CD14-positive monocyte (primary cell): ENCODE measurements at regions of chr14 and their contacts with region 1.

Region 1: DNA sequence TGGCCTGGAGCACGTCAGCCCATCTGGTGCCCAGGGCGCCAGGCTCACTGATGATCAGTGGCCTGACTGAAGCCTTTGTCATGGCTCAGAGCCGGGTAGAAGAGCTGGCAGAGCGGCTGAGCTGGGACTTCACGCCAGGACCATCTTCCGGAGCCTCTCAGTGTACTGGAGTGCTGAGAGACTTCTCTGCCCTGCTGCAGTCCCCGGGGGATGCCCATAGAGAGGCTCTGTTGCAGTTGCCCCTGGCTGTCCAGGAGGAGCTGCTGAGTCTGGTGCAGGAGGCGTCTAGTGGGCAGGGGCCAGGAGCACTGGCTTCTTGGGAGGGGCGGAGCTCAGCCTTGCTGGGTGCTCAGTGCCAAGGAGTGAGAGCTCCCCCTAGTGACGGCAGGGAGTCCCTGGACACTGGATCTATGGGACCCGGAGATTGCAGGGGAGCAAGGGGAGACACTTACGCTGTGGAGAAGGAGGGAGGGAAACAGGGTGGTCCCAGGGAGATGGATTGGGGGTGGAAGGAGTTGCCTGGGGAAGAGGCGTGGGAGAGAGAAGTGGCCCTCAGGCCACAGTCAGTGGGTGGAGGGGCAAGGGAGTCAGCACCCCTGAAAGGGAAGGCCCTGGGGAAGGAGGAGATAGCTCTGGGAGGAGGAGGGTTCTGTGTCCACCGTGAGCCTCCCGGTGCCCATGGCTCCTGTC is 2.0 kb downstream of the KHNYN start:
- DNase-seq: peak; percentile 90 to 93 (median 92)
- H3K4me3 ChIP-seq: peak overlapping the region in 1 of 3 experiments; percentile 91
- H3K4me3 Mint-ChIP-seq: peak overlapping the region; percentile 17 to 86
- H3K27ac ChIP-seq: peak overlapping the region; percentile 81 to 100
- H3K27ac Mint-ChIP-seq: peak overlapping the region; percentile 91 to 96 (median 95)
- H3K4me1 ChIP-seq: peaks cover 32 to 40% of the 10 kb centered on the region in 2 donors
- H3K4me1 Mint-ChIP-seq: peaks cover 36% of the 10 kb centered on the region
- H3K27me3 ChIP-seq: no peaks in the 10 kb centered on the region
- H3K27me3 Mint-ChIP-seq: peaks cover 5 to 9% (median 8%) of the 10 kb centered on the region in 3 donors
- CTCF ChIP-seq: peak; percentile 90

Region 2: GRCh38 chr14:24241829-24242443 is 189.8 kb before region 1 on chr14:
- intact Hi-C with region 1: loop called in 1 of 2 experiments (anchors 10 kb)
- DNase-seq: peak; percentile 88 to 93 (median 92)
- H3K4me3 ChIP-seq: peak overlapping the region; percentile 48 to 82 (median 78)
- H3K4me3 Mint-ChIP-seq: peak overlapping the region; percentile 90 to 97
- H3K27ac ChIP-seq: peak overlapping the region; percentile 94 to 98
- H3K27ac Mint-ChIP-seq: peak overlapping the region; percentile 99 to 100 (median 100)
- H3K4me1 ChIP-seq: peaks cover 50 to 72% of the 10 kb centered on the region in 2 donors
- H3K4me1 Mint-ChIP-seq: peaks cover 66% of the 10 kb centered on the region
- H3K27me3 ChIP-seq: no peaks in the 10 kb centered on the region
- H3K27me3 Mint-ChIP-seq: no peaks in the 10 kb centered on the region
- CTCF ChIP-seq: peak; percentile 33

Region 3: GRCh38 chr14:24332268-24332993 is 99.3 kb before region 1 on chr14:
- intact Hi-C with region 1: loop called (anchors 2 kb)
- DNase-seq: peak; percentile 63 to 77 (median 67)
- H3K4me3 ChIP-seq: peak overlapping the region in 1 of 3 experiments; percentile 67
- H3K4me3 Mint-ChIP-seq: peak overlapping the region; percentile 74 to 88
- H3K27ac ChIP-seq: no peak overlapping the region
- H3K27ac Mint-ChIP-seq: peak overlapping the region in 6 of 7 donors; percentile 41 to 70 (median 64)
- H3K4me1 ChIP-seq: peaks cover 92 to 95% of the 10 kb centered on the region in 2 donors
- H3K4me1 Mint-ChIP-seq: peaks cover 89% of the 10 kb centered on the region
- H3K27me3 ChIP-seq: peaks cover 9 to 27% of the 10 kb centered on the region in 2 donors
- H3K27me3 Mint-ChIP-seq: peaks cover 23 to 42% (median 40%) of the 10 kb centered on the region in 3 donors
- CTCF ChIP-seq: peak; percentile 86